Naive thymus-derived CD4-positive, alpha-beta T cell (primary cell): ENCODE measurements at regions of chr11 and their contacts with region 1.

Region 1: DNA sequence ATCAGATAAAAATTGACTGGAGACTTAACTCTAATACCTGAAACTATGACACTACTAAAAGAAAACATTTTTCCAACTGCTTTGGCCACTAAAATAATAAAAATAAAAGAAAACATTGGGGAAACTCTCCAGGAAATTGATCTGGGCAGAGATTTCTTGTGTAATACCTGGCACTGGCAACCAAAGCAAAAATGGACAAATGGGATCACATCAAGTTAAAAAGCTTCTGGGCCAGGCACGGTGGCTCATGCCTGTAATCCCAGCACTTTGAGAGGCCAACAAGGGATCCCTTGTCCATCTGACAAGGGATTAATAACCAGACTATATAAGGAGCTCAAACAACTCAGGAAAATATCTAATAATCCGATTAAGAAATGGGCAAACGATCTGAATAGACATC is 64.6 kb upstream of the RAB1B start:
- DNase-seq: no peak
- ATAC-seq: no peak
- H3K4me3 ChIP-seq: no peak overlapping the region
- H3K4me3 Mint-ChIP-seq: no peak overlapping the region
- H3K27ac ChIP-seq: no peak overlapping the region
- H3K27ac Mint-ChIP-seq: peak overlapping the region in 4 of 9 donors; percentile 32 to 53 (median 46)
- H3K4me1 ChIP-seq: no peaks in the 10 kb centered on the region
- H3K4me1 Mint-ChIP-seq: peaks cover under 1 to 15% (median 8%) of the 10 kb centered on the region in 7 donors
- H3K27me3 ChIP-seq: no peaks in the 10 kb centered on the region
- H3K27me3 Mint-ChIP-seq: no peaks in the 10 kb centered on the region

Region 2: GRCh38 chr11:66142370-66143263 is 61.2 kb before region 1 on chr11:
- CTCF ChIA-PET with region 1: no interaction called
- POLR2A ChIA-PET with region 1: no interaction called
- intact Hi-C with region 1: no loop called
- DNase-seq: no peak
- ATAC-seq: no peak
- H3K4me3 ChIP-seq: no peak overlapping the region
- H3K4me3 Mint-ChIP-seq: peak overlapping the region in 1 of 10 donors; percentile 32
- H3K27ac ChIP-seq: no peak overlapping the region
- H3K27ac Mint-ChIP-seq: no peak overlapping the region
- H3K4me1 ChIP-seq: peaks cover 0 to 35% of the 10 kb centered on the region in 2 donors
- H3K4me1 Mint-ChIP-seq: peaks cover 32 to 74% (median 68%) of the 10 kb centered on the region in 7 donors
- H3K27me3 ChIP-seq: no peaks in the 10 kb centered on the region
- H3K27me3 Mint-ChIP-seq: no peaks in the 10 kb centered on the region

Region 3: DNA sequence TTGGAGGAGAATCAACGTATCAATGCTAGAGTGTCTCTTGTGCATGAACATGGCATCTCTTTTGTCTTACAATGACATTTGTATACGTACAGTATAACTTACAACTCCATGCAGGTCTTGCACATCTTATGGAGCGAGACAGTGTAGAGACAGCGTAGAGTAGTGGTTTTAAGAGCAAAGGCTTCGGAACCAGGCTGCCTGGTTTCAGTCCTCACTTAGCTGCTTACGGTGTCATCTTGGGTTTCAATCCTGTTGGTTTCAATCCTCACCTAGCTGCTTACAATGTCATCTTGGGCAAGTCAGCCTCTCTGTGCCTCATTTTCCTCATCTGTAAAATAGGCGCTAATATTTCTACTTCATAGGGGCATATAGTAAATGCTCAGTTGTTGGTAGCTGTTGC is 35.6 kb before region 1 on chr11:
- CTCF ChIA-PET with region 1: no interaction called
- POLR2A ChIA-PET with region 1: no interaction called
- intact Hi-C with region 1: loop called in 1 of 2 experiments (anchors 5 kb)
- DNase-seq: no peak
- ATAC-seq: no peak
- H3K4me3 ChIP-seq: no peak overlapping the region
- H3K4me3 Mint-ChIP-seq: no peak overlapping the region
- H3K27ac ChIP-seq: no peak overlapping the region
- H3K27ac Mint-ChIP-seq: no peak overlapping the region
- H3K4me1 ChIP-seq: no peaks in the 10 kb centered on the region
- H3K4me1 Mint-ChIP-seq: peaks cover 9 to 73% (median 60%) of the 10 kb centered on the region in 7 donors
- H3K27me3 ChIP-seq: no peaks in the 10 kb centered on the region
- H3K27me3 Mint-ChIP-seq: no peaks in the 10 kb centered on the region

Region 4: DNA sequence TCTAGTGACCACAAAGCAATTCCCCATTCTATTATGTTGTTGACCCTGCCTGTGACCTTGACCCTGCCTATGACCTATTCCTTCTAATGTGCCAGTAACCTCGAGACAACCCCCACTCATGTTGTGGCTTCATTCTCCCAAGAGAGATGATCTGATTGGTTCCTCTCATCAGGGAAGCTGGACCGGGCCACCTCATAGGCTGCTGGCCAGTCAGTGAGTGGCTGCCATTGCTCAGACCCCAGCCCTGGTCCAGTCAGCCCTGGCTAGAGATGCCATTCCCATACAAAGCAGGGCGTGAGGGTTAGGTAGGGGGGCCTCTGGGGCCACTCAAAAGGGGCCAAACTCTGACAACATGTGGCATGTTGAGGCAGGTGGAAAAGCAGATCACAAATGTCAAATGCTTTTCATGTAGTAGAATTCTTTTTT is 155.8 kb after region 1 on chr11:
- CTCF ChIA-PET with region 1: no interaction called
- POLR2A ChIA-PET with region 1: no interaction called
- intact Hi-C with region 1: no loop called
- DNase-seq: no peak
- ATAC-seq: no peak
- H3K4me3 ChIP-seq: no peak overlapping the region
- H3K4me3 Mint-ChIP-seq: no peak overlapping the region
- H3K27ac ChIP-seq: no peak overlapping the region
- H3K27ac Mint-ChIP-seq: peak overlapping the region in 3 of 9 donors; percentile 19 to 74 (median 28)
- H3K4me1 ChIP-seq: no peaks in the 10 kb centered on the region
- H3K4me1 Mint-ChIP-seq: peaks cover 0 to 3% (median 0%) of the 10 kb centered on the region in 7 donors
- H3K27me3 ChIP-seq: no peaks in the 10 kb centered on the region
- H3K27me3 Mint-ChIP-seq: no peaks in the 10 kb centered on the region